ENCODE measurements at regions of chr5 and their contacts with region 1.

Region 1: GRCh38 chr5:149434162-149435014 is 55.3 kb upstream of the IL17B start:
- DNase-seq: peak; percentile 84
- ATAC-seq: peak; percentile 14; the same call in 1 of the 2 replicates
- H3K4me3 ChIP-seq: no peak overlapping the region
- H3K27ac ChIP-seq: no peak overlapping the region
- H3K4me1 ChIP-seq: peaks cover 24% of the 10 kb centered on the region
- H3K27me3 ChIP-seq: no peaks in the 10 kb centered on the region
- CTCF ChIP-seq: peak; percentile 98

Region 2: GRCh38 chr5:148864113-148864841 is 570.1 kb before region 1 on chr5:
- CTCF ChIA-PET with region 1: no interaction called
- POLR2A ChIA-PET with region 1: no interaction called
- intact Hi-C with region 1: no loop called
- DNase-seq: no peak
- ATAC-seq: peak; percentile 51
- H3K4me3 ChIP-seq: no peak overlapping the region
- H3K27ac ChIP-seq: no peak overlapping the region
- H3K4me1 ChIP-seq: no peaks in the 10 kb centered on the region
- H3K27me3 ChIP-seq: no peaks in the 10 kb centered on the region
- CTCF ChIP-seq: no peak

Region 3: GRCh38 chr5:149381987-149382340 is 52.4 kb before region 1 on chr5:
- CTCF ChIA-PET with region 1: interaction called, 6 read pairs
- POLR2A ChIA-PET with region 1: no interaction called
- intact Hi-C with region 1: loop called (anchors 1 kb)
- DNase-seq: peak; percentile 89
- ATAC-seq: peak; percentile 98
- H3K4me3 ChIP-seq: no peak overlapping the region
- H3K27ac ChIP-seq: no peak overlapping the region
- H3K4me1 ChIP-seq: no peaks in the 10 kb centered on the region
- H3K27me3 ChIP-seq: no peaks in the 10 kb centered on the region
- CTCF ChIP-seq: peak; percentile 99

Region 4: DNA sequence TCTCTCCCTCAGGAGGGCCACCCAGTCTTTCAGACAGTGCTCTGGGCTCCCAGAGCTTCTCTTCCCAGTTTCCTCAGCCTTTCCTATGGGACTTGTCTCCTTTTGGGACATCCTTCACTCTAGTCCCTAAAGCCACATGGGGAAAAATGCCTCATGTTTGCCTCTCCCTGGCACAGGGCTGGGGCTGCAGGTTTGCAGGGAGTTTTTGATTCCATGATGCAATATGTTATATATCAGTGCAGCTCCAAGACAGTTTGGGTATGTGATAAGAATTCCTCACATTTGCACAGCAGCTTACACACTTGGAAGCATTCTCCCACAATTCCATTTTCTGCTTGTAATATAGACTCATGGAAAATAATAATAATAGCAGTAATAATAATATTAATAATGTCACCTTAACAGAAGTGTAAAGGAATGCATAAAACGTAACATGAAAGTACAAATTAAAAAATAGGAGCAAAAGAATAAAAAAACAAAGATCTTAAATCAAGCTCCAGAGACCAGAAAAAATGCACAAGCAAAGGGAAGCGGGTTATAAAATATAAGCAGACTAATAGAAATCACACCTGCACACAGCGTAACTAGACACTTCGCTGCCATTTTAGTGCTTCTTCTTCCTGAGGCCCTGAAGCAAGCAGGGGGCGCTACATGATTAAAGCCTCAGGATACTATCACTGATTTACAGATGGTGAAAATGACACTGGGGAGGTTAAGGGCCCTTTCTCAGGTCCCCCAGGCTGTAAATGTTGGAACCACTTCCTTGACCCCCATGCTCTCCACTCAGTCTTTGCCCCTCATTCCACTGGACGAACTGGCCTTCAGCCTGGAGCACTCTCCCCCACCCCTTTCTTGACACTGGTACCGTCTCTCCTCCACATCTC is 14.7 kb after region 1 on chr5:
- CTCF ChIA-PET with region 1: no interaction called
- POLR2A ChIA-PET with region 1: no interaction called
- intact Hi-C with region 1: no loop called
- DNase-seq: peak; percentile 61
- ATAC-seq: no peak
- H3K4me3 ChIP-seq: no peak overlapping the region
- H3K27ac ChIP-seq: no peak overlapping the region
- H3K4me1 ChIP-seq: peaks cover 21% of the 10 kb centered on the region
- H3K27me3 ChIP-seq: no peaks in the 10 kb centered on the region
- CTCF ChIP-seq: peak; percentile 70